ENCODE measurements at regions of chr6 and their contacts with region 1.

Region 1: DNA sequence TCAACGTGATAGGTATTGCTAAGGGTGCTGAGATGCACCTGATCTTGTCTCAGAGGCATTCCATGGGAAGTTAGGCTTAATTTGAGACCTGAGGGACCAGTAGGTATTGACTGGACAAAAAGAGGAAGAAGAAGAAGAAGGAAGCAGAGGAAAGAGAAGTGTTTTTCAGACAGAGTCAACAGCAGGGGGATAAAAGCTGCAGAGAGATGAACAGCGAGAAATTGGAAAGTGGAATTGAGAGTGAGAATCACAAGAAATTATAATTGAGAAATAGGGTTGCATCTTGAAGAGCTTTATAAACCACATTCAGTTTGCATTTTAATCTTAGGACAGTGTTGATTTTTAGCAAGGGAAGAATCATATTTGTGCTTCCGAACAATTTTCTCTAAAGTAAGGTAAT is 254.0 kb downstream of the CD83 start:
- DNase-seq: no peak
- H3K4me3 ChIP-seq: no peak overlapping the region
- H3K27ac ChIP-seq: no peak overlapping the region
- H3K4me1 ChIP-seq: peaks cover 19% of the 10 kb centered on the region
- CTCF ChIP-seq: no peak

Region 2: GRCh38 chr6:14396826-14397517 is 25.4 kb after region 1 on chr6:
- CTCF ChIA-PET with region 1: no interaction called
- POLR2A ChIA-PET with region 1: no interaction called
- intact Hi-C with region 1: no loop called
- DNase-seq: no peak
- H3K4me3 ChIP-seq: no peak overlapping the region
- H3K27ac ChIP-seq: no peak overlapping the region
- H3K4me1 ChIP-seq: peaks cover 13% of the 10 kb centered on the region
- CTCF ChIP-seq: peak; percentile 72

Region 3: DNA sequence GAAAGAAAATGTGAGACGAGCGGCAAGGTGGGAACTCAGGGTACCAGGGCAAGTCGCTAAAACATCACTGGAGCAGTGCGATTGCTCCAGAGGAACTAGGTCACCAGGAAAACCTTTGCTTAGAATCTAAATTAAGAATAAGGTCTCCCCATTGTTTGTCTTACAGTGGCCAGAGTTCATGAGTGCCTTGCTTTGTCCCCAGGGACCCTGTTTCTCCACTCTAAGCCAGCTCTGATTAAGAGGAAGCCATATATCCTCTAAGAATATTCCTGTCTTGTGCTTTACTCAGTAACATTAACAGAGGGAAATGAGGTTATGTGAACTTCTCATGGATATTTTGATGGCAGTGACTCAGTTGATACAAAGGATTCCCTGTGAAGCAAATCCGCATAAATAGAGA is 51.8 kb after region 1 on chr6:
- CTCF ChIA-PET with region 1: no interaction called
- POLR2A ChIA-PET with region 1: no interaction called
- intact Hi-C with region 1: no loop called
- DNase-seq: no peak
- H3K4me3 ChIP-seq: no peak overlapping the region
- H3K27ac ChIP-seq: no peak overlapping the region
- H3K4me1 ChIP-seq: no peaks in the 10 kb centered on the region
- CTCF ChIP-seq: no peak

Region 4: DNA sequence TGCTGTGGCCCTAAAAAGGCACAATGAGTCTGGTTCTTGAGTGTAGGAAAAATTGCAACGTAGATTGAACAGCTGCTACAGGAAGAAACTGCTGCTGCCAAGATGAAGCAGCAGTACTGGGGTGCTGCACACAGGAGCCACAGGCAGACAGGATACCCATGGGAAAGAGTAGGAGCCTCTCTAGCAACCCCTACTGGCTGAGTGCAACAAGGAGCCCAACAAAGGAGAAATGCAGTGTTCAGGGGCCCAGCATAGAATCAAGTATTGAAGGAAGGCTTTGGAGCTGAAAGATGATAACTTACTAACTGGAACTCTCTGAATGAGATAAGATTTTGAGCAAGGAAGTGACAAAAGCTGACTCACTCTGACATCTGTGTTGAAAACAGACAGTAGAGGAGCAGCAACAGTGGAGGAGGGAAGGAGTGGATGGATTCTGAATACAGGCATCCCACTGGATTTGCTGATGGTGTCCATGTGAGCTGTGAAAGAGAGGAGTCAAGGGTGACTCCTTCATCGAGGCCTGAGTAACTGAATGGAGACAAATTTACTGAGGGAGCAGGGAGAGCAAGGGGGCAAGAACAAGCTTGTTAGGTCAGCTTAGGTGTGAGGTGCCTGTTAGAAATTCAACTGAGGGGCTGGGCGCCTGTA is 339.6 kb after region 1 on chr6:
- CTCF ChIA-PET with region 1: interaction called, 17 read pairs
- POLR2A ChIA-PET with region 1: no interaction called
- intact Hi-C with region 1: no loop called
- DNase-seq: peak; percentile 79
- H3K4me3 ChIP-seq: no peak overlapping the region
- H3K27ac ChIP-seq: no peak overlapping the region
- H3K4me1 ChIP-seq: peaks cover 7% of the 10 kb centered on the region
- CTCF ChIP-seq: peak; percentile 80

Region 5: DNA sequence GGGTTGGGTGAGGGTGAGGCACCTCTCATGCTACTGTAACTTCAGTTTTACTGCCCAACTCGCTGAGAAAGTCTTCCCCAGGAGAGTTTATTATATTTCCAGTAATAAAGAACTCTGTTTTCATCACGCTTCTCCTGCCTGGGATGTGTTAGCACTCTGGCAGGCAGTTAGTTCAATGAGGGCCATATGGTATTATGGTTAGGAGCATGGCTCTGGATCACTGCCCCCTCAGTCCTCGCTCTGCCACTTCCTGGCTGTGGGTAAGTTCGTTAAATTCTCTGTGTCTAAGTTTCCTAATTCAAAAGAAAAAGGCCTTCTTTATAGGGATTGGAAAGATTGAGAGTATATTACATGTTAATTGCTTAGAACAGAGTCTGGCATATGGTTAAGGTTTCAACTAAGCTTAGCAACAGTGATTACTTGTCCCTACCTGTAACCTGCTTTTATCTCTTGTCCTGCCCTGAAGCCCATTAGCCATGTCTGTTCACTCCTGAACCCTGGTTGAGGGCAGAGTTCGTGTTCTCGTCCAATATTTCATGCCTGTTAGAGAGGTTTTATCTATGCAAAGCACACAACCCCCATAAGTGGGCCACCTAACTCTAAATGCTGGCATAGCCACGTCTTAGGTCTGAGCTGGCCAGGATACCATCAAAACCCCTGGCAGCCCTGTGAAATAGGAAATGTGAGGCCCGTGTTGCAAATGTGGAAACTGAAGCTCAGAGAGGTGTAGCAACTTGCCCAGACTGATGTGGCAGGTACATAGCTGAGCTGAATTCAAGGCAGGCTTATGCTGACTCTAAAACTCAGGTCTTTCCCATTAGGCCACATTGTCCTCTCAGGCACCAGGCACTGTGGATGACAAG is 531.9 kb after region 1 on chr6:
- CTCF ChIA-PET with region 1: no interaction called
- POLR2A ChIA-PET with region 1: no interaction called
- intact Hi-C with region 1: no loop called
- DNase-seq: peak; percentile 20
- H3K4me3 ChIP-seq: no peak overlapping the region
- H3K27ac ChIP-seq: no peak overlapping the region
- H3K4me1 ChIP-seq: peaks cover 11% of the 10 kb centered on the region
- CTCF ChIP-seq: no peak